Activated CD4-positive, alpha-beta memory T cell treated with anti-CD3 and anti-CD28 coated beads, Interleukin-2, amount 10 ng/mL, durations not matched to agents 7 days and 5 days (primary cell): ENCODE measurements at regions of chr7 and their contacts with region 1.

Region 1: DNA sequence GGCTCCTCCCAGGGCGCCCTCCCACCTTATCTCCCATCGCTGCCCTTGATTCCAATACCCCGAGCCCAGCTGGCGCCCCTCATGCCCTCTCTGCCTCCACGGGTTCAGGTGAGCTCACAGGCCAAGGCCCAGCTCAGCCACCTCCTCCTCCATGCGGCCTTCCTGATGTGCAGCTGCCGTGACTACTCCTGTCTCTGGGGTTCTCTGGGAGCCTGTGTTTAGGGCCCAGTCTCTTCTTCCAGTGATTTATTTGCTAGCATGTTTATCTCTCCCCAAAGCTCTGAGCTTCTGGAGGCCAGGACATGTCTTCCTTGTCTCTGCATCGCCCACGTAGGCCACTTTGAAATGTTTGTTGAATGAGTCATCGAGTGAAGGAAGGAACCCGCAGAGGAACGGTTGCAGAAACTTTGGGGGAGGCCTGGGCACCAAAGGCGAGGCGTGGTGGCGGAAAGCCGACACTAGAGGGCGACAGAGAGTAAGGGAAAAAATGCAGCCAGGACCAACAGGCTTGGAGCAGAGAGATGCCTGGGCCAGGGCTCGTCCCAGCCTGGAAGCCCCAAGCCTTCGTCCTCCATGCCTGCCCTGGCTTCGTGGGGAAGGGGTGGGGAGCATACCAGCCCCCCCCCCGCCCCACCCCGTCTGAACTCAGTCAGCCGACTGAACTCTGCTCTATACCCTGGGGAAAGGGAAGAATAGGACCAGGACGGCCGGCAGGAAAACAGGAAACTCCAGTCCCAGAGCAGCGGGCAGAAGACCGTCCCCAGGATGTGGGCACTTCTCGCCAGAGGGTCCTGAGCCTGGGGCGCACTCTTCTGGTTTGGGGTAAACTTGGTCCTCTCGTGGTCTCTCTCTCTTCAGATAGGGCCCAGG is 10.9 kb upstream of the HSPB1 start:
- DNase-seq: peak; percentile 90
- H3K4me3 Mint-ChIP-seq: no peak overlapping the region
- H3K27ac Mint-ChIP-seq: peak overlapping the region; percentile 51
- H3K4me1 Mint-ChIP-seq: peaks cover 14% of the 10 kb centered on the region
- H3K27me3 Mint-ChIP-seq: peaks cover 5% of the 10 kb centered on the region

Region 2: GRCh38 chr7:76272851-76273497 is 18.6 kb before region 1 on chr7:
- CTCF ChIA-PET with region 1: interaction called, 12 read pairs
- POLR2A ChIA-PET with region 1: interaction called, 3 read pairs
- DNase-seq: no peak
- H3K4me3 Mint-ChIP-seq: peak overlapping the region; percentile 21
- H3K27ac Mint-ChIP-seq: peak overlapping the region; percentile 59
- H3K4me1 Mint-ChIP-seq: peaks cover 20% of the 10 kb centered on the region
- H3K27me3 Mint-ChIP-seq: peaks cover 43% of the 10 kb centered on the region

Region 3: DNA sequence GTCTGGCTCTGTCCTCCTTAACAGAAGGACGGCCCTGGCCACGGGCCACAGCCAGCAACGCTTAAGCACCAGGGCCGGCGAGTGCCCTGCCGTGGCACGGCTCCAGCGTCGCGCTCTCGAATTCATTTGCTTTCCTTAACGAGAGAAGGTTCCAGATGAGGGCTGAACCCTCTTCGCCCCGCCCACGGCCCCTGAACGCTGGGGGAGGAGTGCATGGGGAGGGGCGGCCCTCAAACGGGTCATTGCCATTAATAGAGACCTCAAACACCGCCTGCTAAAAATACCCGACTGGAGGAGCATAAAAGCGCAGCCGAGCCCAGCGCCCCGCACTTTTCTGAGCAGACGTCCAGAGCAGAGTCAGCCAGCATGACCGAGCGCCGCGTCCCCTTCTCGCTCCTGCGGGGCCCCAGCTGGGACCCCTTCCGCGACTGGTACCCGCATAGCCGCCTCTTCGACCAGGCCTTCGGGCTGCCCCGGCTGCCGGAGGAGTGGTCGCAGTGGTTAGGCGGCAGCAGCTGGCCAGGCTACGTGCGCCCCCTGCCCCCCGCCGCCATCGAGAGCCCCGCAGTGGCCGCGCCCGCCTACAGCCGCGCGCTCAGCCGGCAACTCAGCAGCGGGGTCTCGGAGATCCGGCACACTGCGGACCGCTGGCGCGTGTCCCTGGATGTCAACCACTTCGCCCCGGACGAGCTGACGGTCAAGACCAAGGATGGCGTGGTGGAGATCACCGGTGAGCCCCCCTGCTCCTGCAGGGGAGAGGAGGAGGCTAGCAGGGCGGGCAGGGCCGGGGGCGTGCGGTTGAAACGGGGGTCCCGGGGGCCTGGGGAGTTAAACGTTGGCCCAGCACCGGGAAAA is 11.0 kb after region 1 on chr7 and contains the start of gene HSPB1:
- CTCF ChIA-PET with region 1: interaction called, 18 read pairs
- POLR2A ChIA-PET with region 1: no interaction called
- DNase-seq: peak; percentile 62
- H3K4me3 Mint-ChIP-seq: peak within 1 kb of the TSS; percentile 84
- H3K27ac Mint-ChIP-seq: peak within 1 kb of the TSS; percentile 67
- H3K4me1 Mint-ChIP-seq: peaks cover 18% of the 10 kb centered on the region
- H3K27me3 Mint-ChIP-seq: peaks cover 9% of the 10 kb centered on the region
- total RNA-seq, gene HSPB1: 33.7 to 38.4 TPM

Region 4: DNA sequence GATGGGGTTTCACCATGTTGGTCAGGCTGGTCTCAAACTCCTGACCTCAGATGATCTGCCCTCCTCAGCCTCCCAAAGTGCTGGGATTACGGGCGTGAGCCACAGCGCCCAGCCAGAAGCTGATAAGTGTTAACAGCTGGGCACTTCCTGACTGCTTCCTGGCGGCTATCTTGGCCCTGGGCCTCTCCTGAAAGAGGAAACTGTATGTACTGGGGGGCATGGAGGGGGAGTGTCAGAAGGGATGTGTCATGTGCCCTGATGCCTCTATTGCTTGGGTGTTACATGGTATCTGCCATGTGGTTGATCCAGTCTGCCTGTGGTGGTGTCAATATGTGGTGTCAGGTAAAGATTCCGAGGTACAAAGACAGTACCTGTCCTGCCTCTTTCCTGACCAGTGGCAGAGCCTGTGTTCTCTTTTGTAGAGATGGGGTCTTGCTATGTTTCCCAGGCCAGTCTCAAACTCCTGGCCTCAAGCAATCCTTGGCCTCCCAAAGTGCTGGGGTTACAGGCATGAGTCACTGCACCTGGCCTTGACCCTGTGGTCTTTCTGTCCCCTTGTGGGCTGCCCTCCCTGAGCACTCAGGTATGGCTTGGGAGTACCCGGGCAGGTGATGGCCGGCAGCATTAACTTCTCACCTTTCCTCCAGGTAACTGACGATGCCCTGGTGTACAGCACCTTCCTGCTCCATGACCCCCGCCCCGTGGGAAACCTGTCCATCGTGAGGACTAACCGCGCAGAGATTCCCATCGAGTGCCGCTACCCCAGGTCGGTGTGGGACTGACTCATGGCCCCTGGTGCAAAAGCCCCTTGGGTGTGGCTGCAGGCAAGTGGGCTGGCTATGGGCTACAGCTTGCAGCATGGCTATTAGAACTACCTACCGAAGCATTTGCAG is 137.5 kb after region 1 on chr7:
- CTCF ChIA-PET with region 1: no interaction called
- POLR2A ChIA-PET with region 1: no interaction called
- DNase-seq: no peak
- H3K4me3 Mint-ChIP-seq: no peak overlapping the region
- H3K27ac Mint-ChIP-seq: no peak overlapping the region
- H3K4me1 Mint-ChIP-seq: peaks cover 8% of the 10 kb centered on the region
- H3K27me3 Mint-ChIP-seq: no peaks in the 10 kb centered on the region